MCF 10A (cell line): ENCODE measurements at regions of chr1 and their contacts with region 1.

Region 1: GRCh38 chr1:108559215-108560186 is at the start of gene EEIG2:
- DNase-seq: peak; percentile 82
- H3K4me3 Mint-ChIP-seq: peak within 1 kb of the TSS; percentile 78
- H3K27ac Mint-ChIP-seq: no peak within 1 kb of the TSS
- H3K4me1 Mint-ChIP-seq: no peaks in the 10 kb centered on the region
- H3K27me3 Mint-ChIP-seq: no peaks in the 10 kb centered on the region
- CTCF ChIP-seq: peak; percentile 71
- total RNA-seq, gene EEIG2: 0.63 and 0.93 TPM in 2 replicates

Region 2: GRCh38 chr1:108512239-108512981 is 47.1 kb before region 1 on chr1:
- CTCF ChIA-PET with region 1: interaction called, 47 read pairs
- POLR2A ChIA-PET with region 1: interaction called, 3 read pairs
- intact Hi-C with region 1: loop called (anchors 1 kb)
- DNase-seq: peak; percentile 52
- H3K4me3 Mint-ChIP-seq: no peak overlapping the region
- H3K27ac Mint-ChIP-seq: no peak overlapping the region
- H3K4me1 Mint-ChIP-seq: no peaks in the 10 kb centered on the region
- H3K27me3 Mint-ChIP-seq: peaks cover 15% of the 10 kb centered on the region
- CTCF ChIP-seq: peak; percentile 86

Region 3: GRCh38 chr1:108521990-108522393 is 37.5 kb before region 1 on chr1:
- CTCF ChIA-PET with region 1: interaction called, 12 read pairs
- POLR2A ChIA-PET with region 1: no interaction called
- intact Hi-C with region 1: no loop called
- DNase-seq: no peak
- H3K4me3 Mint-ChIP-seq: no peak overlapping the region
- H3K27ac Mint-ChIP-seq: no peak overlapping the region
- H3K4me1 Mint-ChIP-seq: no peaks in the 10 kb centered on the region
- H3K27me3 Mint-ChIP-seq: peaks cover 29% of the 10 kb centered on the region
- CTCF ChIP-seq: no peak

Region 4: GRCh38 chr1:108570128-108570527 is 10.6 kb after region 1 on chr1:
- CTCF ChIA-PET with region 1: interaction called, 20 read pairs
- POLR2A ChIA-PET with region 1: interaction called, 6 read pairs
- intact Hi-C with region 1: no loop called
- DNase-seq: peak; percentile 42
- H3K4me3 Mint-ChIP-seq: no peak overlapping the region
- H3K27ac Mint-ChIP-seq: no peak overlapping the region
- H3K4me1 Mint-ChIP-seq: no peaks in the 10 kb centered on the region
- H3K27me3 Mint-ChIP-seq: no peaks in the 10 kb centered on the region
- CTCF ChIP-seq: peak; percentile 34

Region 5: GRCh38 chr1:108584348-108584856 is 24.9 kb after region 1 on chr1:
- CTCF ChIA-PET with region 1: interaction called, 11 read pairs
- POLR2A ChIA-PET with region 1: interaction called, 3 read pairs
- intact Hi-C with region 1: no loop called
- DNase-seq: no peak
- H3K4me3 Mint-ChIP-seq: no peak overlapping the region
- H3K27ac Mint-ChIP-seq: no peak overlapping the region
- H3K4me1 Mint-ChIP-seq: peaks cover 12% of the 10 kb centered on the region
- H3K27me3 Mint-ChIP-seq: no peaks in the 10 kb centered on the region
- CTCF ChIP-seq: no peak